ENCODE measurements at regions of chr16 and their contacts with region 1.

Region 1: GRCh38 chr16:4288148-4288921 is 15.5 kb upstream of the TFAP4 start:
- DNase-seq: no peak
- H3K4me3 ChIP-seq: no peak overlapping the region
- H3K27me3 ChIP-seq: no peaks in the 10 kb centered on the region
- CTCF ChIP-seq: peak; percentile 99

Region 2: DNA sequence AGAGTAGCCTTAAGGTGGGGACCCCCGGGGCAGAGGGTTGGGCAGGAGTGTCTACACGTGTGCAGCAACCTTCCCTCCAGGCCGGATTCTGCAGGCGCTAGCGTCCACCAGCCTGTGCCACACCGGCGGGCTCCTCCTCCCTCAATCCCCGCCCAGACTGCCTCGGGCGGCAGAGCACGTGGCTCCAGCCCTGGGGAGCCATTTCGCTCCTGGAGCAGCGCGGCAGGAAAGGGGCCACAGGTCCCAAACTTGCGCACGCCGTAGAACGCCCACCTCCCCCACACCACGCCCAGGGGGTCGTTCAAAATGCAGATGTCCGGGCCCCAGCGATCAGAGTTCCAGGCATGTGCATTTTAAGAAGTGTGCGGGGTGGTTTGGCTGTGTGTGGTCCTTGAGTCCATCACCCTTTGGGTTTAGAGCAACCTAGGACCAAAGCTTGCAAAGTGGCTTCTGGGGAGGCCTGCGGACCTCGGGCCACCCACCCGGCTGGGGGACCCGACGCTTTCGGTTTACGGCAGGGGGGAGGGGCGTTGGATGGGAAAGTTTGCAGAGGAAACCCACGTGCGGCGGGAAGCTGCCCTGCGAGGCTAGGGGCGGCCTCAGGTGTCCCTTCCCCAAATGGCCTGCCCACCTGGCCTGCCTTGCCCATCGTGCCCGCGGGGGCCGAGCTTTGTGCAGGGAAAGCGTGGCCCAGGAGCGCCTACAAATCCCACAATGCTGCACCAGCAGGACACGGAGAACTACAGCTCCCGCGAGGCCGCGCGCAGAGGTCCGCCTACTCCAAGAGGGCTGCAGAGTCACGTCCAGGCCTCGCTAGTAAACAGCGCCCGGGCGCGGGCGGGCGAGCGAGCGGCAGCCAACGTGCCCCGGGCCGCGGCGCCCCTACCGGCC is 16.9 kb before region 1 on chr16:
- CTCF ChIA-PET with region 1: interaction called, 21 read pairs
- POLR2A ChIA-PET with region 1: interaction called, 25 read pairs
- DNase-seq: peak; percentile 47
- H3K4me3 ChIP-seq: peak overlapping the region; percentile 73
- H3K27me3 ChIP-seq: no peaks in the 10 kb centered on the region
- CTCF ChIP-seq: no peak

Region 3: DNA sequence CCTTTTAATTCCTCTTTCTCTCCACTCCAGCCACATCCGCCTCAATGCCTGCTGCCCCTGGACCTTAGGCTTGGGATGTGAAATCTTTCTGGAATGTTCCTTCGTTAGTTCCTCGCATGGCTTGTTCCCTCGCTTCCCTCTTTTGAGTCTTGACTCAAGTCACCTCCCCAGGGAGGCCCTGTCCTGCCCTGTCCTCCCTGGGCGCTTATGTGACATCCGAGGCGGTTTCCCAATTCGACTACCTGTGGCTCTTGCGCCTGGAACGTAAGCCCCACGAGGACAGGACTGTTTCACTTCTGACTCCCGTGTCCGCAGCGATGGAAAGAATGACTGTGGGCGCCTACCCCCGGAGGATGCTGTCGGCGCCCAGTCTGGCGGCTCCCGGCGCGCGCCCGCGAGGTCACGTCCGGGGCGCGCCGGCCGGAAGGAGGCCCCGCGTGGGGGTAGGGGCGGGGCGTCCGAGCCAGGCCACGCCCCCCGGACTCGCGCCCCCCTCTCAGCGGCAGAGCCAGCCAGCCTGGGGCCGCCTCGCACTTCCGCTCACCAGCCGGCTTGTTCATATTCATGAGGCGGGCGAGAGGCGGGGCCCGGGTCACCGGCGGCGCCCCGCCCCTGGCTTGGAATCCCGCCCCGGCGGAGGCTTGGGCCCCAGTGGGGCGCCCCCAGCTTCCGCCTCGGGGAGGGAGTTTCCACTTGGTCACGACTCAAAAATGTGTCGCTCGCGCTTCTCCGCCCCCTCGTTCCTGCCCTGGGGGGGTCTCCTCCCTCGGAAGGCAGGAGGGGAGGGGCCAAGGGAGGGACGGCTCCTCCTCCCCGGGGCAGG is 19.1 kb after region 1 on chr16:
- CTCF ChIA-PET with region 1: interaction called, 13 read pairs
- POLR2A ChIA-PET with region 1: no interaction called
- DNase-seq: peak; percentile 81
- H3K4me3 ChIP-seq: peak overlapping the region; percentile 59
- H3K27me3 ChIP-seq: no peaks in the 10 kb centered on the region
- CTCF ChIP-seq: no peak

Region 4: GRCh38 chr16:4315186-4316109 is 27.1 kb after region 1 on chr16 and contains the start of gene GLIS2:
- CTCF ChIA-PET with region 1: interaction called, 20 read pairs
- POLR2A ChIA-PET with region 1: no interaction called
- DNase-seq: no peak
- H3K4me3 ChIP-seq: peak within 1 kb of the TSS; percentile 91
- H3K27me3 ChIP-seq: no peaks in the 10 kb centered on the region
- CTCF ChIP-seq: no peak
- polyA plus RNA-seq, gene GLIS2: 4.8 and 8.8 TPM in 2 replicates

Region 5: GRCh38 chr16:4330277-4330874 is 42.0 kb after region 1 on chr16:
- CTCF ChIA-PET with region 1: interaction called, 211 read pairs
- POLR2A ChIA-PET with region 1: interaction called, 3 read pairs
- DNase-seq: no peak
- H3K4me3 ChIP-seq: no peak overlapping the region
- H3K27me3 ChIP-seq: no peaks in the 10 kb centered on the region
- CTCF ChIP-seq: peak; percentile 98

Region 6: DNA sequence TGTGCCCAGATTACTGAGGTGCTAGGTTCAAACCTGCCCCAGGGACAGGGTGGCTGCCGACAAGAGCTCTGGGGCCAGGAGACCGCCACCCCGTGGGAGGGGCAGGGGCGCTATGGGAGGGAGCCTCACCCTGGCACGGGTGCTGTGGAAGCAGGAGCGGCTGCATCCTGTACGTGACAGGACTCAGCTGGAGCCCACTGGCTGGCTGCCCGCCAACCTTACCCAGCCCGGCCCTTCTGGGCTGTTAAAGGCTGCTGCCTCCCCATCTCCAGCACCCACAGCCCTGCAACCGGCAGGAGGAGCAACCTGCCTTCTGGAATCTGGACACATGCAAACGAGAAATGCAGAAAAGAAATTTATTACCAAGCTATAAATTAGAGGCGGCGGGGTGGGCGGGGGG is 51.6 kb after region 1 on chr16:
- CTCF ChIA-PET with region 1: interaction called, 211 read pairs
- POLR2A ChIA-PET with region 1: no interaction called
- DNase-seq: no peak
- H3K4me3 ChIP-seq: no peak overlapping the region
- H3K27me3 ChIP-seq: no peaks in the 10 kb centered on the region
- CTCF ChIP-seq: peak; percentile 26; the same call in 1 of the 2 replicates